Common myeloid progenitor, CD34-positive (primary cell): ENCODE measurements at regions of chr20 and their contacts with region 1.

Region 1: GRCh38 chr20:645318-646106 is 7.5 kb downstream of the SRXN1 start:
- DNase-seq: peak; percentile 80 to 86 (median 81)
- H3K4me3 ChIP-seq: no peak overlapping the region
- H3K27ac ChIP-seq: no peak overlapping the region
- H3K4me1 ChIP-seq: peaks cover 0 to 10% (median 6%) of the 10 kb centered on the region in 4 experiments
- H3K27me3 ChIP-seq: peaks cover 0 to 5% (median 0%) of the 10 kb centered on the region in 5 experiments

Region 2: GRCh38 chr20:571754-572441 is 73.6 kb before region 1 on chr20:
- CTCF ChIA-PET with region 1: interaction called, 19 read pairs
- POLR2A ChIA-PET with region 1: interaction called, 6 read pairs
- DNase-seq: no peak
- H3K4me3 ChIP-seq: no peak overlapping the region
- H3K27ac ChIP-seq: no peak overlapping the region
- H3K4me1 ChIP-seq: peaks cover 0 to 26% (median 6%) of the 10 kb centered on the region in 4 experiments
- H3K27me3 ChIP-seq: peaks cover 0 to 34% (median 5%) of the 10 kb centered on the region in 5 experiments

Region 3: GRCh38 chr20:609371-609964 is 36.0 kb before region 1 on chr20:
- CTCF ChIA-PET with region 1: interaction called, 21 read pairs
- POLR2A ChIA-PET with region 1: interaction called, 6 read pairs
- DNase-seq: peak in 2 of 3 donors; percentile 40 to 51
- H3K4me3 ChIP-seq: peak overlapping the region in 5 of 7 experiments; percentile 23 to 66 (median 58)
- H3K27ac ChIP-seq: no peak overlapping the region
- H3K4me1 ChIP-seq: peaks cover 3 to 44% (median 40%) of the 10 kb centered on the region in 4 experiments
- H3K27me3 ChIP-seq: peaks cover 0 to 9% (median 2%) of the 10 kb centered on the region in 5 experiments

Region 4: DNA sequence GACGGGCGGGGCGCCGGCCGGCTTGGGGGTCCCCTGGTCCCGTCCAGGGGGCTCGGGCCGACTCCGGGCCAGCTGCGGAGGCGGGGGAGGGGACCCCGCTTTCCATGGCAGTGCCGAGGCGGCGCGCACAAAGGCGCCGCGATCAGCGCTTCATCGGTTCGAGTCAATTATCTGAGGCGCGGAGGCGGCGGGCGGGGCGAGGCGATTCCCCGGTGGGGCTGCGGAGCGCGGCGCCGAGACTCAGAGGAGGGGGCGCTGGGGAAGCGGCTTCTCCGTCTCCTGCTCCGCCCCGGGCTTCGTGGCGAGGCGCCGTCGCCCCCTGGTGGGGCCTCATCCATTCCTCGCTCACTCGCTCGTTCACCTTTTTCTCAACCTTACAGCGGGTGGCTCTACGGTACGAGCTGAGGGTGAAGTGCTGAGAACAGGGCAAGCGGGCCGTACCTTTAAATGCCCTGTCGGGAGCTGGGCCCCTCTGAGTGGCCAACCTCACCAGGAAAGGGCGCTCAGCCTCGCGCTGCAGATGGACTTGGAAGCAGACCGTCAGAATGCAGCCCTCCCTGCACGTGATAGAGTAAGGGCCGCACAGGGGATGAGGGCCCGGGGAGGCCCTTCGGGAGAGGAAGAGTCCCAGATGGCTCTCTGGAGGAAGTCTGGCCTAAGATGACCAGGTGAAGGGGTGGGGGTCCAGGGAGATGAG is 82.9 kb after region 1 on chr20:
- CTCF ChIA-PET with region 1: interaction called, 11 read pairs
- POLR2A ChIA-PET with region 1: no interaction called
- DNase-seq: peak; percentile 74 to 84 (median 84)
- H3K4me3 ChIP-seq: peak overlapping the region; percentile 6 to 70 (median 64)
- H3K27ac ChIP-seq: no peak overlapping the region
- H3K4me1 ChIP-seq: peaks cover 0 to 11% (median 9%) of the 10 kb centered on the region in 4 experiments
- H3K27me3 ChIP-seq: peaks cover 2 to 40% (median 10%) of the 10 kb centered on the region in 5 experiments